Panc1 (cell line): ENCODE measurements at regions of chr5 and their contacts with region 1.

Region 1: DNA sequence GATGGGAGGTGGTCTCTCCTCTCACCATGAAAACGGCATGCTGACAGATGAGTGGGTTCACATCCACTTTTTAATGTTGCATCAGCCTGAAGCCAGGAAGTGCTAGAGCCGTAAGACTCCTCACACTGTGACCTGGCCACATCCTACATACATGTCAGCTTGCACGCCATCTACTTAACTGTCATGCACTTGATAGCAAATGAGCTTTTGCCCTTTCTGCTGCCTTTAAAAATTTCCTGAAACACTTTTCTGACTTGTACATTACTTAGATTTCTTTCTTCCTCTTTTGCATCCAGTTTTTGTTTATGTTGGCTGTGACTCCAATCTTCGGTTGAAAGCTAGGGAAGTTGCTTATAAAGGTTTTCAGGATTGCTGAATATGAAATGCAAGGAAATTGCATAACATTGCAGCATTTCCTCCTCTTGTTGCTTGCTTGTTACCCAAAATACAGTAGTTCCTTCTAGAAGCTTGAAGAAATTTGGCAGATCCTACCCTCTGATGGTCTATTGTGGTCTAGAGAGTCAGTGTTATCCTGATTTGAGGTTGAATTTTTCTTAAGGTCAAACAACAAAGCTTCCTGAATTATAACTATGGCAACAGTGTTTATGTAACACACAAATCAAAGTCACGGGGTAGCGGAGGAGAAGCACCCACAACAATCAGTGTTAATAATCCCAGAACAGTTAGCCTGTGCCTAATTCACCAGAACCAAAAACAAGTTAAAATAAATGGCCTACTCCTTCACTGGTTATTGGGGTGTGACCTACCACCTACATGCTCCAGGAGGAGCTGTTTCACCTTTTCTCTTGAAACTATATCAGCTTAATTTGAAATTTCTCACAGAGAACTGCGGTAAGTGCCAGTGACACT is 232.5 kb downstream of the ARHGAP26 start:
- DNase-seq: no peak
- ATAC-seq: no peak; the same call in 1 of the 2 replicates
- H3K4me3 ChIP-seq: no peak overlapping the region
- H3K27ac ChIP-seq: peak overlapping the region; percentile 72
- H3K4me1 ChIP-seq: peaks cover 10% of the 10 kb centered on the region
- H3K27me3 ChIP-seq: no peaks in the 10 kb centered on the region
- CTCF ChIP-seq: peak; percentile 66

Region 2: DNA sequence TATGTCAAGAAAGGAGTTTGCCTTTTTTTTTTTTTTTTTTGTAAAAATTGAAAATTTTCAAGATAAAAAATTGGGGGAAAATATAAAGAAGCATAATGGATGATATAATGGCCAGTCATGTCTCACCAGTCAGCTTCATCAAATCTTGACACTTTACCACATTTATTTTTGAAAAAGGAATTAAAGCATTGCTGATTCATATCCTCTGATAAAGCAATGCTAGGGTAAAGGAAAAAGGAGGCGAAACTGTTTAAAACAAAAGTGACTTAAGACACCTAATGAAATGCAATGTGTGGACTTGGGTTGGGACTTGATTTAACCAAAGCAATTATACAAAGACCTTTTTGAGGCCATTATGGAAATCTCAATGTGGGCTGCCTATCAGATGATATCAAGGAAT is 24.0 kb before region 1 on chr5:
- CTCF ChIA-PET with region 1: no interaction called
- POLR2A ChIA-PET with region 1: interaction called, 11 read pairs
- in situ Hi-C with region 1: no loop called
- intact Hi-C with region 1: no loop called
- DNase-seq: no peak
- ATAC-seq: no peak
- H3K4me3 ChIP-seq: no peak overlapping the region
- H3K27ac ChIP-seq: no peak overlapping the region
- H3K4me1 ChIP-seq: peaks cover 7% of the 10 kb centered on the region
- H3K27me3 ChIP-seq: no peaks in the 10 kb centered on the region
- CTCF ChIP-seq: no peak

Region 3: GRCh38 chr5:143016777-143017516 is 14.3 kb after region 1 on chr5:
- CTCF ChIA-PET with region 1: no interaction called
- POLR2A ChIA-PET with region 1: no interaction called
- in situ Hi-C with region 1: no loop called
- intact Hi-C with region 1: no loop called
- DNase-seq: no peak
- ATAC-seq: 0 out of 2 replicates have a peak, but pooled peaks have one; percentile 51
- H3K4me3 ChIP-seq: no peak overlapping the region
- H3K27ac ChIP-seq: no peak overlapping the region
- H3K4me1 ChIP-seq: no peaks in the 10 kb centered on the region
- H3K27me3 ChIP-seq: no peaks in the 10 kb centered on the region
- CTCF ChIP-seq: peak; percentile 60

Region 4: GRCh38 chr5:143213851-143214363 is 211.2 kb after region 1 on chr5:
- CTCF ChIA-PET with region 1: no interaction called
- POLR2A ChIA-PET with region 1: no interaction called
- in situ Hi-C with region 1: no loop called
- intact Hi-C with region 1: no loop called
- DNase-seq: no peak
- ATAC-seq: no peak
- H3K4me3 ChIP-seq: no peak overlapping the region
- H3K27ac ChIP-seq: no peak overlapping the region; the same call in 1 of the 2 replicates
- H3K4me1 ChIP-seq: no peaks in the 10 kb centered on the region
- H3K27me3 ChIP-seq: no peaks in the 10 kb centered on the region
- CTCF ChIP-seq: no peak

Region 5: GRCh38 chr5:143235423-143235822 is 232.7 kb after region 1 on chr5:
- CTCF ChIA-PET with region 1: no interaction called
- POLR2A ChIA-PET with region 1: no interaction called
- in situ Hi-C with region 1: no loop called
- intact Hi-C with region 1: no loop called
- DNase-seq: no peak
- ATAC-seq: no peak
- H3K4me3 ChIP-seq: no peak overlapping the region
- H3K27ac ChIP-seq: no peak overlapping the region
- H3K4me1 ChIP-seq: peaks cover 5% of the 10 kb centered on the region; the same call in 1 of the 2 replicates
- H3K27me3 ChIP-seq: no peaks in the 10 kb centered on the region
- CTCF ChIP-seq: no peak